Psoas muscle (tissue), 8 donors: ENCODE measurements at regions of chr22 and their contacts with region 1.

Region 1: DNA sequence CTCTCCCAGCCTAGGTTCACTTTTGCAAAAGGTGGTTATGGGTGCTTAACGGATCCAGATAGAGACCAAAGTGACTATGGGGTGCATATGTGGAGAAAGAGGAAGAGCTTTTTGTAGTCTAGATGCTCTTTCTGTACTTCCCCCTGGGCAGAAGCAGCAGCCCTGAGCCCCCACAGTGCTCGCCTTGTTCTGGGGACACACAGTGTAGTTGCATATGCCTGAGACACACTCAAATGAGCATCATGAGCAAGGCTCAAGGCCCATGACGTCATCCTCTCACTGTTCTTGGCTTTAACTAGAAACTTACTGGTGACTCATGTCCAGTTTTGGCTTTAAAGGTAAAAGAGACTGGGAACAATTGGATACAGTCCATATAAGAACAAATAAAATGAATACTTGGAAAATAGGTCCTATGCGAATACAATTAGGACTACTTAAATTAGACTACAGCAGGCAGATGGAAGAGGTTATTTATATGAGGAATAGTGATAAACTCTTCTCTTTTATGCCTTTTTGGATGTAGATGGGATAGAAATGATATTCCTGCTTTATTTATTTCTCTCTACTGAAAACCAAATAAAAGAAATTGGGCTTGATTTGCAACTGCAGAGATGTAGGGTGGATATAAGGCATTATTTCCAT is 20.1 kb upstream of the PEX26 start:
- DNase-seq: peak; percentile 71 to 80
- ATAC-seq: peak; percentile 71 to 84 (median 76)
- H3K4me3 ChIP-seq: peak overlapping the region; percentile 13
- H3K27ac ChIP-seq: peak overlapping the region; percentile 84
- H3K4me1 ChIP-seq: peaks cover 32% of the 10 kb centered on the region
- H3K27me3 ChIP-seq: no peaks in the 10 kb centered on the region
- CTCF ChIP-seq: no peak

Region 2: DNA sequence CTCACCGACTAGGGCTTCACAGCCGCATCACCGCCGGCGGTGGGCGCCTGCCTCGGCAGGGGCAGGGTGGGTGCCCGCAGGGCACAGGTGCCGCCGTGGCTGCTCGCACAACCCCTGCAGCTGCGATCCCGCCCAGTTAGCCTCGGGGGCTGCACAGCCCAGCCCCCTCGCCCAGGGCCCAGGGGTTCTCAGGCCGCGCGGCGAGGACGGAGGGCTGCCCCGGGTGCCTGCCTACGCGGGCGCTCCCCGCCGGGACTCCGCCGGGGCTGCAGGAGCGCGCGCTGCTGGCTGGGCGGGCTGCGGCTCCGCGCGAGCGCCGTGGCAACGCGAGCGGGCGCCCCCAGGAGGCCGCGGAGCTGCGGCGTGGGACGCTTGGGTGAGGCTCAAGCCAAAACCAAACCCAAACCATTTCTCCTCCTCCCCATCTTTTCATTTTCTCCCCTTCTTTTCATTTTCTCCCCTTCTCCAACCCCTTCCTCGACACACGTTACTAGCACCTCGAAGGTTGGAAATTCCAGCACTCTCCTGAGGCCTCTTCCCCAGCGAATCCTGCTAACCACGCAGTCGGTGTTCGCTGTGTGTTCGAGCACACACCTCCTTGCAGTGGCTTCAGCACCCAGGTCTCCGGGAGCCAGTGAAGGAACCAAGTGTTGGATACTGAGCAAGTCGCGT is 33.3 kb before region 1 on chr22 and contains the start of gene MICAL3:
- intact Hi-C with region 1: loop called in 1 of 2 experiments (anchors 5 kb)
- DNase-seq: peak; percentile 62 to 79
- ATAC-seq: peak; percentile 71 to 76 (median 73)
- H3K4me3 ChIP-seq: peak within 1 kb of the TSS; percentile 67
- H3K27ac ChIP-seq: peak within 1 kb of the TSS; percentile 80
- H3K4me1 ChIP-seq: peaks cover 22% of the 10 kb centered on the region
- H3K27me3 ChIP-seq: no peaks in the 10 kb centered on the region
- CTCF ChIP-seq: peak; percentile 72
- total RNA-seq, gene MICAL3: 15.5 to 38.3 (median 27.1) TPM

Region 3: DNA sequence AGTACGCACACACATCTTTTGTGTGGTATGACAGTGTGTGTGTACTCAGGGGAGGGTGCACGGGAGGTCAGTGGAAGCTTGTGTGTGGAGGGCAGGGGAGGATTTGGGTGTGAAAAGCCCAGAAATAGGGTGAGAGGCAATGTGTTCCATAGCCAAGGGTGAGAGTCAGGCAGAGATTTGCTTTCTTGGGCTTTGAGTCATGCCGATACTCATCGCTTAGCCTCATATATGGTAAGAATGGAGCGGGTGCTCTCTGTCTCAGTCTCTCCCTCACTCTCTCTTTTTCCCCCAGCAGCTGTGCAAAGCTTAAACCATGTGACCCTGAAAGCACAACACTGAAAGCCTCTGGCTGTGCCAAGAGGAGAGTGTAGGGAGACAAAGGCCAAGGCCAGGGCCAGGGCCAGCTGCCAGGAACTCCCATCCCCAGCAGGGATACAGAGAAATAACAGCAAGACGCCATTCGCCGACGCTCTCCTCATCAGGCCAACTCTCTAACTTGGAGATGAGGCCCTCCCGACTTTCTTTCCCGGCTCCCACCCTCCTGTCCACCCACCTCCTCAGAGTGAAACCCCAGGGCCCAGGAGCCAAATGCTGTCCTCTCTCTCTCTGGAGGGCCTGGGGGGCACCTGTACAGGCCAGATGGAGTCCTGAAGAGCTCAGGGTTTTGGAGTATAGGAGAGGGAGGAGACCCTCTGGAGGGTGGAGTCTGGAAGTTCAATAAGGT is 13.0 kb before region 1 on chr22:
- intact Hi-C with region 1: no loop called
- DNase-seq: peak; percentile 51 to 76
- ATAC-seq: peak; percentile 41 to 56 (median 50)
- H3K4me3 ChIP-seq: no peak overlapping the region
- H3K27ac ChIP-seq: peak overlapping the region; percentile 82
- H3K4me1 ChIP-seq: peaks cover 30% of the 10 kb centered on the region
- H3K27me3 ChIP-seq: no peaks in the 10 kb centered on the region
- CTCF ChIP-seq: no peak